Mammary epithelial cell (primary cell): ENCODE measurements at regions of chr16 and their contacts with region 1.

Region 1: GRCh38 chr16:54152362-54153239 is 134.0 kb downstream of the IRX3 start:
- DNase-seq: no peak
- H3K4me3 ChIP-seq: no peak overlapping the region
- H3K27ac ChIP-seq: no peak overlapping the region
- H3K4me1 ChIP-seq: no peaks in the 10 kb centered on the region
- H3K27me3 ChIP-seq: no peaks in the 10 kb centered on the region
- CTCF ChIP-seq: no peak

Region 2: DNA sequence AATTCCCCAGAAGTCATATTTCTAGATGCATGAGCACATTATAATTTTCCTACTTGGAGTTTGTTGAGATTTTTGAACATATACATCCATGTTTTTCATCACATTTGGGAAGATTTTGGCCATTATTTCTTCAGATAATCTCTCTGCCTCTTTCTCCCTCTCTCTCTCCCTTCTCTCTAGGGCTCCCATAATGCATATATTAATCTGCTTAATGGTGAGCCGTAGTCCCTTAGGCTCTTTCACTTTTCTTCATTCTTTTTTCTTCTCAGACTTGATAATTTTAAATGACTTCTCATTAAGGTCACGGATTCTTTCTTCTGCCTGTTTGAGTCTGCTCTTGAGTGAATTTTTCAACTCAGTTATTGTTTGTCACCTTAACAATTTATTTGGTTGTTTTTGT is 32.4 kb after region 1 on chr16:
- CTCF ChIA-PET with region 1: no interaction called
- dilution Hi-C with region 1: loop called (anchors 5 kb)
- in situ Hi-C with region 1: no loop called
- intact Hi-C with region 1: no loop called
- DNase-seq: no peak
- H3K4me3 ChIP-seq: no peak overlapping the region
- H3K27ac ChIP-seq: no peak overlapping the region
- H3K4me1 ChIP-seq: no peaks in the 10 kb centered on the region
- H3K27me3 ChIP-seq: peaks cover 2% of the 10 kb centered on the region
- CTCF ChIP-seq: no peak